ENCODE measurements at regions of chr2 and their contacts with region 1.

Region 1: GRCh38 chr2:157302492-157303099 is 23.0 kb downstream of the ERMN start:
- DNase-seq: no peak
- ATAC-seq: peak; percentile 88
- H3K4me3 ChIP-seq: no peak overlapping the region
- H3K27ac ChIP-seq: no peak overlapping the region
- H3K4me1 ChIP-seq: no peaks in the 10 kb centered on the region
- H3K27me3 ChIP-seq: peaks cover 2% of the 10 kb centered on the region; the same call in 1 of the 2 replicates
- CTCF ChIP-seq: peak; percentile 81

Region 2: DNA sequence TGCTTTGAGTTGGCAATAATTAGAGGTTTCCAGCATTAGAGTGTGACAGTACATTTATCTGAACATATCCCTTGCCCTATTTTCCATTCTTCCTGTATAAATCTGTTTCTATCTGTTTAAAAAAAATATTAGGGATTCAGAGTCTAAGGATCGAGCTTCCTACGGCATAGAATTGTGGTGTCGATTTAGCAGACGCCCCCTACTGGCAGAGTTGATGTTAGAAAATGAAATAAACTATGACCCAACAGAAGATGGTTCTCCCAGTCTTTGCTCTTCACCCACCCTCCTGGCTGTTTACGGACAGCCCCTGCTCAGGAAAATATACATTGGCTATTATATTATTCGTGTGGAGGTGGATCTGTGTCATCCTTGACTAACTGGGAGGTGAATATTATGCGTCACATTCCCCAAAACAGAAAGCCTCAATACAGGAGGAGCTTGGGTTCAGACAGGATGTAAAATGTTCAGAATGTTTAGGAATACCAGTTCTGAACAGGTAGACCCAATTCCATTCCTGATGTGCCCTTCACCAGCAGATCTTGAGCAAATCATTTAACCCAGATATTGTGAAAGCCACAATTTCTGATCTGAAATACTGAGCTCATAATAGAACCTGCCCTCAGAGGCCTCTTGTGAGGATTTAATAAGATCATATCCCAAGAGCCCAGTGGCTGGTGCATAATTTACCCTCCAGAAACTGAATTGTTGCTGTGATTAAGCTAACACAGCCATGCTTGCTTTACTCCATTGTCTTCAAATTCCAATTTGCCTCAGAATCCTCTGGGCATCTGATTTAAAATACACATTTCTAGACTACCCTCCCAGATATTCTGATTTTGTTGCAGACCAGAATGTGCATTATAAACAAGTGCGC is 33.8 kb after region 1 on chr2:
- CTCF ChIA-PET with region 1: interaction called, 11 read pairs
- POLR2A ChIA-PET with region 1: no interaction called
- in situ Hi-C with region 1: no loop called
- intact Hi-C with region 1: loop called (anchors 5 kb)
- DNase-seq: no peak
- ATAC-seq: no peak
- H3K4me3 ChIP-seq: no peak overlapping the region
- H3K27ac ChIP-seq: no peak overlapping the region
- H3K4me1 ChIP-seq: no peaks in the 10 kb centered on the region
- H3K27me3 ChIP-seq: no peaks in the 10 kb centered on the region
- CTCF ChIP-seq: peak; percentile 81

Region 3: GRCh38 chr2:157480182-157480961 is 177.8 kb after region 1 on chr2:
- CTCF ChIA-PET with region 1: no interaction called
- POLR2A ChIA-PET with region 1: no interaction called
- in situ Hi-C with region 1: no loop called
- intact Hi-C with region 1: loop called (anchors 10 kb)
- DNase-seq: no peak
- ATAC-seq: no peak
- H3K4me3 ChIP-seq: no peak overlapping the region
- H3K27ac ChIP-seq: no peak overlapping the region
- H3K4me1 ChIP-seq: no peaks in the 10 kb centered on the region
- H3K27me3 ChIP-seq: no peaks in the 10 kb centered on the region
- CTCF ChIP-seq: no peak

Region 4: GRCh38 chr2:158006961-158007719 is 704.5 kb after region 1 on chr2:
- CTCF ChIA-PET with region 1: no interaction called
- POLR2A ChIA-PET with region 1: no interaction called
- in situ Hi-C with region 1: no loop called
- intact Hi-C with region 1: loop called (anchors 5 kb)
- DNase-seq: no peak
- ATAC-seq: no peak; the same call in 1 of the 2 replicates
- H3K4me3 ChIP-seq: no peak overlapping the region
- H3K27ac ChIP-seq: no peak overlapping the region
- H3K4me1 ChIP-seq: no peaks in the 10 kb centered on the region
- H3K27me3 ChIP-seq: 0 out of 2 replicates have a peak, but pooled peaks cover 5% of the 10 kb centered on the region
- CTCF ChIP-seq: peak; percentile 14; the same call in 1 of the 2 replicates

Region 5: DNA sequence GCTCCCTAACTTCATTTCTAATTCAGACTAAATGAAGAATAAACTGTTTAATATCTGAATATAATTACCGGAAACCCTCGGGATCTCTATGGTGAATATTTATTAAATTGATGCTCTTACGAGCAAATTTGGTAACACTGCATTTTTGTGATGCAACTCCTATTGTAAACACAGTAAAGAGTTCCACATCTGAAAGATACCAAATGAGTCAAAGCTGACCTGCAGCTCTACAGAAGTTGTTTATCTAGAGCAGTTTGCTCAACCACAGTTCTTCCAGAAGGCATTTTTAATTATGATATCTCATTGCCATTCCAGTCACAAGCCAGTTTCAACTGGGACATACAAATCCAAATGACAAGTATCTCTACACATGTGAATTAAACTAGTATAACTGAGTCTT is 1283.9 kb after region 1 on chr2:
- CTCF ChIA-PET with region 1: no interaction called
- POLR2A ChIA-PET with region 1: interaction called, 14 read pairs
- in situ Hi-C with region 1: no loop called
- intact Hi-C with region 1: no loop called
- DNase-seq: no peak
- ATAC-seq: no peak
- H3K4me3 ChIP-seq: no peak overlapping the region
- H3K27ac ChIP-seq: no peak overlapping the region
- H3K4me1 ChIP-seq: no peaks in the 10 kb centered on the region
- H3K27me3 ChIP-seq: no peaks in the 10 kb centered on the region
- CTCF ChIP-seq: no peak